RWPE1 (cell line): ENCODE measurements at regions of chr5 and their contacts with region 1.

Region 1: DNA sequence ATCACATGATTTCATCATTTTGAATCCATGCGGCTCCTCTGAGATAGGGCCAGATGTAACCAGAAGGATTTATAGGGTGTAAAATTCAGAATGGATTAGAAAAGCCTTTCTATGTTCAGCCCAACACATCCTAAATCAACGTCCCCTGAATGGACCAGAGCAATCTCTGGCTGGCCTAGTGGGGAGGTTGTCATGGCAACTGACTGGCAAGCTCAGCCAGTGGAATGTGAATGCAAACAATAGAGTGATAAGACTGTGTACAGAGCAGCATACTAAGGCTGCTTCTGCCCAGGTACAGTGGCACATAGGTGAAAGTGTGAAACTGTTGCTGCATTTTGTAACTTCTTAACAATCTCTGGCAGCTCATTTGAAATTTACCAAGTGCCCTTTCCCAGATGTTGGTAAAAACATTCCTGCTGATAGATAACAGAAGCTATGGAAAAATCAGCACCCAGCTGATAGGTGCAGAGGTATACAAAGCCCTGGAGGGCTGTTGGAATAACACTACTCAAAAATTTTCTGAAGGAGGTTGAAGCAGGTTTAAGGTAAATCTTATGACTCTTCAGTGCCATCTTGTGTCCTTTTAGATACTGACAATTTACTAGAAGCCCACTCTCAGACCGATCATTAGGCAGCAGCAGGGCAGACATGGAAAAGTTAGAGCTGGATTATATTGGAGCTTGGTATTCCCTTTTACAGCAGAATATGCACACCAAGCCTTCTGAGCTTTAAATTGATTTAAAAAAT is 267.2 kb downstream of the RAB3C start:
- DNase-seq: peak; percentile 53
- H3K27ac ChIP-seq: no peak overlapping the region
- CTCF ChIP-seq: peak; percentile 62

Region 2: DNA sequence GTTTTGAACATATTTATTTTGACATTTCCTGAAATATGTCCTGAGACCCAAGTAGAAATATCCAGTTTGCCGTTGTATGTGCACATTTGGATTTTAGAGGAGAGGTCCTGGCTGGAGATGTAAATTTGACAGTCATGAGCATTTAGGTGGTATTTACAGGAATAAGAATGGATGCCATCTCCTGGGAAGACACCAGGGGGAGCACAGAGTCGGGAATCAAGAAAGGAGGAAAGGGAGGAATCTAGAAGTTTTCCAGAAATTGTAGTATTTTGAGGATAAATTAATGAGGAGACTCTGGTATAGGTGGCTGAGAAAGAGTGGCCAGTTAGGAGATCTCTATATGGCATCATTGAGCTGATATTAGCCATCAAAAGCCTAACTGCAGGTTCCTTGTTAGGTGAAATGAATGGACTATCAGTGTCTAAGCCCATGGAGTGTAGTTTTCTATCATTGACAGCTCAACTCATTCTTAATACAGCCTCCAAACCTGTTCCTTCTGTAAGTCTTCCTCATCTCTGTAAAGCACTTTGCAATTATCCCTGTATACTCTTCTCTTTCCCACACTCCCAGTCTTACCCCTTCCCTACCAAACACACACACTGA is 351.7 kb before region 1 on chr5:
- CTCF ChIA-PET with region 1: interaction called, 10 read pairs
- POLR2A ChIA-PET with region 1: no interaction called
- DNase-seq: peak; percentile 64
- H3K27ac ChIP-seq: no peak overlapping the region
- CTCF ChIP-seq: peak; percentile 75

Region 3: DNA sequence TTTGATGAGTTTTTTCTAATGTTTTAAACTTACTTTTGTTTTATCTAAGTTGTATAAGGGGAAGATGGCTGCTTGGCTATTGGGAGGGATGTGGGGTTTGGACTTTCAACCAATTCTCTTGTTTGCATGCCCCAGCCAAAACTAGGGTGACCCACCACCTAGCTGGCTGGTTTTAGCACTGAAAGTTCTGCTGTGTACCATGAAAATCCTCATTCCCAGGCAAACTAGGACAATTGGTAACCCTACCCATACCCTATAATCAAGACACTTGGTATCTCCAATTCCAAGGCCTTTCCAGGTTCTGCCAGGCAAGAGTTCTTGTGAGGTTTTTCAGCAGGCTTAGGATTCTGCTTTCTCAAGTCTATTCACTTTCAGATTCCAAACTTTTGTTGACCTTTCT is 254.1 kb before region 1 on chr5:
- CTCF ChIA-PET with region 1: no interaction called
- POLR2A ChIA-PET with region 1: no interaction called
- DNase-seq: no peak
- H3K27ac ChIP-seq: no peak overlapping the region
- CTCF ChIP-seq: no peak

Region 4: DNA sequence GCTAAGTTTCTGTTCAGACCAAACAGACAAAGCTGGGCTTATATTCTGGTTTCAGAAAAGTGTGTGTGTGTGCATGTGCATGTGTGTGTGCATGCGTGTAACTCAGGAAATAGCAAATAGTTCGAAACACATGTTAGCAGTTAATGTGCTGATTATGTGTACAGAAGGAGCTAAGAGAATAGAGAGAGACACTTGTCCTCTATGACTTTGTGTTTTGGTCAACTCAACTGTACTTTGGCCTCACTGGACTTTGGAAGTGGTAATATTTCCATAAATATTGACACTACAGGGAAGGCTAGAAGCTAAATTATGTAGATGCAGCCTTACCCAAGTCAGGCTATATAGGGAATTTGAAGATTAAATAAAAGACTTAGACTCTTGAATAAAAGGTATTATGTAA is 111.8 kb before region 1 on chr5:
- CTCF ChIA-PET with region 1: no interaction called
- POLR2A ChIA-PET with region 1: no interaction called
- DNase-seq: no peak
- H3K27ac ChIP-seq: no peak overlapping the region
- CTCF ChIP-seq: no peak

Region 5: GRCh38 chr5:58940446-58940845 is 90.4 kb after region 1 on chr5:
- CTCF ChIA-PET with region 1: no interaction called
- POLR2A ChIA-PET with region 1: no interaction called
- DNase-seq: no peak
- H3K27ac ChIP-seq: no peak overlapping the region
- CTCF ChIP-seq: no peak

Region 6: DNA sequence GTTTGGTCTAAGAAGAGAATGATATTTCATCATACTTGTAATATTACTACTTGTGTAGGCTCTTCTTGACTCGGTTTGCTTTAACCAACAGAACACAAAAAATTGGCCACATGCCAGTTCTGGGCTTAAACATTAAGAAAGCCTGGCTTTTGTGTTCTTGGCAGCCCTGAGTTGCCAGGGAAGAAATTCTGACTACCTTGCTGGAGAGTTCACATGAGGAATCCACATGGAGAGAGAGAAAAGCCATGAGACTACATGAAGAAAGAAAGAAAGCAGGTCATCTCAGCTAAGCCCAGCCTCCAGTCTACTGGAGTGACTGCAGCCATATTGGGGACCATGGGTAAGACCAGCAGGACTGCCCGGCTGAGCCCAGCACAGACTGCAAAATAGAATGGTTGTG is 257.6 kb after region 1 on chr5:
- CTCF ChIA-PET with region 1: no interaction called
- POLR2A ChIA-PET with region 1: no interaction called
- DNase-seq: no peak
- H3K27ac ChIP-seq: peak overlapping the region; percentile 55
- CTCF ChIP-seq: no peak